Left cardiac atrium (tissue), 4 donors: ENCODE measurements at regions of chr2 and their contacts with region 1.

Region 1: GRCh38 chr2:63488118-63488713 is 100.1 kb downstream of the WDPCP start:
- DNase-seq: no peak
- ATAC-seq: no peak

Region 2: GRCh38 chr2:62787386-62787785 is 700.8 kb before region 1 on chr2:
- intact Hi-C with region 1: loop called in 1 of 2 experiments (anchors 5 kb)
- DNase-seq: no peak
- ATAC-seq: peak; percentile 70 to 78